WTC11 (cell line): ENCODE measurements at regions of chr10 and their contacts with region 1.

Region 1: DNA sequence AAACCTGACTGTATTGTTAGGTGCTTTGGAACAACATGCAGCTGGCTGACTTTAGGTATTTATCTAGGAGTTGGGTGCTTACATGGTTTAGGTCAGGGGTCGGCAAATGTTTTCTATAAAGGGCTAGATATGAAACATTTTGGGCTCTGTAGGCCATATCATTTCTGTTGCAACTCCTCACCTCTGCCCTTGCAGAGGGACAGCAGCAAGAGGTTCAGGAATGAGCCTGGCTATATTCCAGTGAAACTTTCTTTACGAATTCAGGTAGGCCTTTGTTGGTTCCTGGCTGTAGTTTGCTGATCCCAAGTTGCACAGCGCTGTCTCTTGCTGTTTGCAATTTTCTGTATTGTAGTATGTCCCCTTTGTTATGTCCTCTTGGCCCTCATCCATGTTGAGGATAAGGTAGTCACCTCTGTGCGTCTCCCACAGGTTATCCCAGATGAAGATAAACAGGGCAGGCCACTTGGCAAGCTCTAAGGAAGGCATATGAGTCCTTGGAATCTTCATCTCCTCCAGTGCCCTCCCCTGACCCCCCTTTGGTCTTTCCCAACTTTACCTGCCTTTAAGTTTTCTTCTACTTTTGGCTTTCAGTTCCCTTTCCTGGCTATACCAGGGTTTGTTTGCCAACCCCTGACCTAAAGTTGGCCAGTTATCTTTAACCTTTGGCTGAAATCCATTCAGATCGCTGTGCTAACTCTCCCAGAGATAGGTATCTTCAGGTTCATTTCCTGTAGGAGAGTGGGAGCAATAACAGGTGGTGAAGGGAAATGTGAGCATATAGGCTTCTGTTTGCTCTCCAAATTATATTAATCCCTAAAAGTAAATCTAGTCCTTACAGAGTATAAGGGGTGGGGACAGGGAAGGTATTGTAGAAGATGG is 36.1 kb downstream of the SGPL1 start:
- DNase-seq: no peak
- ATAC-seq: no peak
- H3K4me3 Mint-ChIP-seq: no peak overlapping the region
- H3K27ac Mint-ChIP-seq: no peak overlapping the region
- H3K4me1 Mint-ChIP-seq: no peaks in the 10 kb centered on the region
- H3K27me3 Mint-ChIP-seq: no peaks in the 10 kb centered on the region
- CTCF ChIP-seq: no peak

Region 2: DNA sequence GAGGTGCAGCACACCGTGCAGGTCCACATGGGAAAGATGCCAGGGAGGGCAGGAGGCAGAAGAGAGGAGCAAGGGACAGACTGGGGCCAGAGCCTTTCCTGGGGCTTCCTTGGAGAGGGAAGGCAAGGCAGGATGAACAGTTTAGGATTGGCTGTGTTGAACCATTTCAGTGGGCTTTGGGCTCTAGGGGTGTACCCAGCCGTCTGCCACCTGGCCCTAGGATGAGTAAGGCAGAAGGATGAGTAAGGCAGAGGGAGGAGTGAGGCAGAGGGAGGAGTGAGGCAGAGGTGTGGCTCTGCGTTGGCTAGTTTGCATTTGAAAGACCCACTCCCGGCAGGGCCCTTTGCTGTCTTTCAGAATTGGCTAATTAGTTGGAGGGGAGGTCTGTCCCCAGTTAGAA is 217.8 kb before region 1 on chr10:
- CTCF ChIA-PET with region 1: no interaction called
- POLR2A ChIA-PET with region 1: no interaction called
- DNase-seq: peak; percentile 57
- ATAC-seq: peak; percentile 100
- H3K4me3 Mint-ChIP-seq: no peak overlapping the region
- H3K27ac Mint-ChIP-seq: 0 out of 2 replicates have a peak overlapping the region, but pooled peaks have one; percentile 53
- H3K4me1 Mint-ChIP-seq: peaks cover 25% of the 10 kb centered on the region
- H3K27me3 Mint-ChIP-seq: no peaks in the 10 kb centered on the region; the same call in 1 of the 2 replicates
- CTCF ChIP-seq: no peak

Region 3: DNA sequence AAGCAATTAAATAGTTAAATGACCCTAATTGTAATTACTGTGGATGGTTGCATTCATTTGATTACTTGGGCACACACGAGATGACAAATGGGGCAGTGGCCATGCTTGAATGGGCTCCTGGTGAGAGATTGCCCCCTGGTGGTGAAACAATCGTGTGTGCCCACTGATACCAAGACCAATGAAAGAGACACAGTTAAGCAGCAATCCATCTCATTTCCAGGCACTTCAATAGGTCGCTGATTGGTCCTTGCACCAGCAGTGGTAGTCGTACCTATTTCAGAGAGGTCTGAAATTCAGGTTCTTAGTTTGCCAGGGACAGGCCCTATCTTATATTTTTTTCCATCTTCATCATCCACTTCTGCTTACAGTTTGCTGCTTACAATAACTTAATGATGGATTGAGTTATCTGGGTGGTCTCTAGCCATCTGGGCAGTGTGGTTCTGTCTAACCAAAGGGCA is 28.3 kb after region 1 on chr10:
- CTCF ChIA-PET with region 1: no interaction called
- POLR2A ChIA-PET with region 1: interaction called, 11 read pairs
- DNase-seq: peak; percentile 72
- ATAC-seq: peak; percentile 88
- H3K4me3 Mint-ChIP-seq: no peak overlapping the region
- H3K27ac Mint-ChIP-seq: no peak overlapping the region
- H3K4me1 Mint-ChIP-seq: peaks cover 15% of the 10 kb centered on the region
- H3K27me3 Mint-ChIP-seq: no peaks in the 10 kb centered on the region
- CTCF ChIP-seq: peak; percentile 82